ENCODE measurements at regions of chr4 and their contacts with region 1.

Region 1: GRCh38 chr4:182189103-182189878 is 53.9 kb upstream of the TENM3 start:
- DNase-seq: no peak
- ATAC-seq: no peak
- H3K4me3 ChIP-seq: no peak overlapping the region
- H3K27ac ChIP-seq: no peak overlapping the region
- H3K4me1 ChIP-seq: no peaks in the 10 kb centered on the region
- H3K27me3 ChIP-seq: no peaks in the 10 kb centered on the region
- CTCF ChIP-seq: no peak
- POLR2A ChIP-seq: no peak

Region 2: GRCh38 chr4:182143822-182144625 is 45.3 kb before region 1 on chr4:
- in situ Hi-C with region 1: no loop called
- intact Hi-C with region 1: loop called (anchors 5 kb)
- DNase-seq: no peak
- ATAC-seq: peak in 1 of 2 donors; percentile 31
- H3K4me3 ChIP-seq: peak overlapping the region; percentile 62 to 73 (median 64)
- H3K27ac ChIP-seq: no peak overlapping the region
- H3K4me1 ChIP-seq: peaks cover 0 to 13% of the 10 kb centered on the region in 2 donors
- H3K27me3 ChIP-seq: peaks cover 56 to 85% (median 83%) of the 10 kb centered on the region in 3 donors
- CTCF ChIP-seq: no peak
- POLR2A ChIP-seq: no peak

Region 3: DNA sequence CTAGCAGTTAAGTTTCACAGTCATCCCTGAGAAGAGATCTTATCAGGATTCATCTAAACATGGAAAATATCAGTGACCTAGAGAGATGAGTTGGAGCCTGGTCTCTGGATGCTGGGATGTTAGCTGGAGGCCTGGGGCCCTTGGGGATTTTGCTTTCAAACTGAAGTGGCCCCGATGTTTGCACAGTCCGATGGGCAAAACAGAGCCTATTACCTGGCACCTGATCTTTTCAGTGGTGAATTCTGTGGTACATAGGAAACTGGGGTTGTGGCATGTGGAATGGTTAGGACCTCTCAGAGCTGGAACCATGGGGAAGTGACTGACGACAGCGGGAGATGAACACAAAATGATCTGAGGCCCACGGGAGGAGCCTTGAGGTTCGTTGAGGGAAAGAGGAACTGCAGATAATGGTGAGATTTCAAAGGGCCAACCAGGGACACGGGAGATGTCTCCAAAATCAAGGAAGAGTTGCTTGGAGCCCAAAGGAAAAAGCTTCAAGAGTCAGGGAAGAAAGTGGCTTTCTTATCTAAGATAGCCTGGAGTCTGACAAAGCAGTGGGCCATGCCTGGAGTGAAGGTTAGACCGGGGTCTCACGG is 36.1 kb after region 1 on chr4:
- in situ Hi-C with region 1: no loop called
- intact Hi-C with region 1: loop called (anchors 5 kb)
- DNase-seq: no peak
- ATAC-seq: no peak
- H3K4me3 ChIP-seq: no peak overlapping the region
- H3K27ac ChIP-seq: no peak overlapping the region
- H3K4me1 ChIP-seq: no peaks in the 10 kb centered on the region
- H3K27me3 ChIP-seq: no peaks in the 10 kb centered on the region
- CTCF ChIP-seq: no peak
- POLR2A ChIP-seq: no peak

Measured in gastrocnemius medialis (tissue), 4 donors.